Posterior cingulate gyrus (tissue), 11 donors: ENCODE measurements at regions of chr20 and their contacts with region 1.

Region 1: GRCh38 chr20:45436732-45437391 is 20.9 kb downstream of the PIGT start:
- DNase-seq: peak; percentile 82 to 99 (median 92)

Region 2: GRCh38 chr20:45322952-45323383 is 113.9 kb before region 1 on chr20:
- intact Hi-C with region 1: loop called (anchors 5 kb)
- DNase-seq: peak in 6 of 10 donors; percentile 47 to 91 (median 57)

Region 3: DNA sequence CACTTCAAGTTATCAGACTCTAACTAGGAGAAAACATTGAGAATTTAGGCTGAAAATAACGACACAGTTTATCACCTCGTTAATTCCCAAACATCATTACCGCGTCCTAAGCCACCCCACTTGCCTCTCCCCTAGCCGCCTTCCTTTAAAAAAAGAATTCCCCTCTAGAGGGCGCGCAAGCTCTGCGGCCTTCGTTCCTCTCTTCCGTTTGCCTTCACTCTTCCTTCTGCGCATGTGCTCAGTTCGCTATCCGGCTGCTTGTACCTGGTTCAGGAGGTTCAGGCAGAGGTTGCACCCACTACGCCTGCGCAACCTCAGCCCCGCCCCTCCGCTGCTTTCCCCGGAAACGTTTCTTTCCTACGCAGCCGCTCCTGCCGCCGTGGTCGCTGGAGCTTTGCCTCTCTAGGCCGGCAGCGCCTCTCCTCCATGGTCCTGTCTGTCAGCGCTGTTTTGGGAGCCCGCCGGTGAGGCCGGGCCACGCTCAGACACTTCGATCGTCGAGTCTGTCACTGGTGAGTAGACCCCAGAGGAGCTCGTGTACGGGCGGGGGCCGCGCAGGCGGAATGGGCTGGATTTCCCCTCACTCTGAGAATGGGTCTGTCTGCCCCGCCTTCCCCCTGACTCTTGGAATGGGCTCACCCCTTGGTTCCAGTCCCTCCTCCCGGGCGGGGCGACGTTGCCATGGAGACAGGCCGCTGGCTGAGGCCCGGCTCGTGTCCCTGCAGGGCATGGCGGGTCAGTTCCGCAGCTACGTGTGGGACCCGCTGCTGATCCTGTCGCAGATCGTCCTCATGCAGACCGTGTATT is 73.9 kb before region 1 on chr20 and contains the start of gene SYS1:
- intact Hi-C with region 1: loop called (anchors 1 kb)
- DNase-seq: peak; percentile 95 to 99 (median 98)

Region 4: GRCh38 chr20:45373353-45374100 is 63.3 kb before region 1 on chr20:
- intact Hi-C with region 1: loop called (anchors 2 kb)
- DNase-seq: peak; percentile 79 to 98 (median 90)